Mammary epithelial cell (primary cell): ENCODE measurements at regions of chr10 and their contacts with region 1.

Region 1: GRCh38 chr10:24503461-24504320 is 220.0 kb downstream of the ARHGAP21 start:
- DNase-seq: peak; percentile 54
- H3K4me3 ChIP-seq: no peak overlapping the region
- H3K27ac ChIP-seq: no peak overlapping the region
- H3K4me1 ChIP-seq: peaks cover 2% of the 10 kb centered on the region
- H3K27me3 ChIP-seq: no peaks in the 10 kb centered on the region
- CTCF ChIP-seq: peak; percentile 73

Region 2: DNA sequence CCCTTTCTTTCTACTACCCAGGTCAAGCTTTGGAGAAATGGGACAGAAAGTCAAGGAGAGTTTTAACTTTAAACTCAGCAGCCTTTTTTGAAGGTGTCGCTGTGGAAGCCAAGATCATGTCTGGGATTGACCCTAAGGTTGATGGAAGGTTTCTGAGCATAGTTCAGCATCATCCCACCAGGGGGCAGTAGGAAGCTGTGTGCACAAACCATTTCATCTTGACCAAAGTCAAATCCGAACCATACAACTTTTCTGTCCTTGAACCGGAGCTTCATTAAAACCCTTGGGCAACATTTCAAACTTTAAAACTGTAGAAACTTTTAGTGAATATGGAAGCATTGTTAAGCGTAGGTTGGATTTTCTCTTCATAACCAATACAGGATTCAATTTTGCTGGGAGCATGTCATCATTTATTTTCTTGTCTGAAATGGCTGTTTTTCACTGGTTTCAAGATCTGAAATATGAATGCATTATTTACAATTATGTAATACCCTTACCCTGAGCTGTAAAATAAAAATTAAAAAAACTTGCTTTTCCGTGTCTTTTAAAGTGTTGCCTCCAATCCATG is 509.1 kb before region 1 on chr10:
- CTCF ChIA-PET with region 1: interaction called, 7 read pairs
- dilution Hi-C with region 1: loop called (anchors 5 kb)
- in situ Hi-C with region 1: loop called in 1 of 2 experiments (anchors 25 kb)
- intact Hi-C with region 1: loop called (anchors 1 kb)
- DNase-seq: peak; percentile 25
- H3K4me3 ChIP-seq: no peak overlapping the region
- H3K27ac ChIP-seq: no peak overlapping the region
- H3K4me1 ChIP-seq: no peaks in the 10 kb centered on the region
- H3K27me3 ChIP-seq: peaks cover 3% of the 10 kb centered on the region
- CTCF ChIP-seq: peak; percentile 91 to 93

Region 3: GRCh38 chr10:24238519-24239252 is 265.0 kb before region 1 on chr10:
- CTCF ChIA-PET with region 1: no interaction called
- dilution Hi-C with region 1: no loop called
- in situ Hi-C with region 1: loop called in 1 of 2 experiments (anchors 25 kb)
- intact Hi-C with region 1: no loop called
- DNase-seq: peak; percentile 91
- H3K4me3 ChIP-seq: peak overlapping the region; percentile 53 to 60 (median 58)
- H3K27ac ChIP-seq: peak overlapping the region; percentile 87
- H3K4me1 ChIP-seq: peaks cover 30% of the 10 kb centered on the region
- H3K27me3 ChIP-seq: no peaks in the 10 kb centered on the region
- CTCF ChIP-seq: no peak

Region 4: GRCh38 chr10:24415455-24416125 is 88.1 kb before region 1 on chr10:
- CTCF ChIA-PET with region 1: no interaction called
- dilution Hi-C with region 1: no loop called
- in situ Hi-C with region 1: no loop called
- intact Hi-C with region 1: loop called (anchors 1 kb)
- DNase-seq: peak; percentile 27
- H3K4me3 ChIP-seq: no peak overlapping the region
- H3K27ac ChIP-seq: no peak overlapping the region
- H3K4me1 ChIP-seq: peaks cover 11% of the 10 kb centered on the region
- H3K27me3 ChIP-seq: no peaks in the 10 kb centered on the region
- CTCF ChIP-seq: no peak

Region 5: DNA sequence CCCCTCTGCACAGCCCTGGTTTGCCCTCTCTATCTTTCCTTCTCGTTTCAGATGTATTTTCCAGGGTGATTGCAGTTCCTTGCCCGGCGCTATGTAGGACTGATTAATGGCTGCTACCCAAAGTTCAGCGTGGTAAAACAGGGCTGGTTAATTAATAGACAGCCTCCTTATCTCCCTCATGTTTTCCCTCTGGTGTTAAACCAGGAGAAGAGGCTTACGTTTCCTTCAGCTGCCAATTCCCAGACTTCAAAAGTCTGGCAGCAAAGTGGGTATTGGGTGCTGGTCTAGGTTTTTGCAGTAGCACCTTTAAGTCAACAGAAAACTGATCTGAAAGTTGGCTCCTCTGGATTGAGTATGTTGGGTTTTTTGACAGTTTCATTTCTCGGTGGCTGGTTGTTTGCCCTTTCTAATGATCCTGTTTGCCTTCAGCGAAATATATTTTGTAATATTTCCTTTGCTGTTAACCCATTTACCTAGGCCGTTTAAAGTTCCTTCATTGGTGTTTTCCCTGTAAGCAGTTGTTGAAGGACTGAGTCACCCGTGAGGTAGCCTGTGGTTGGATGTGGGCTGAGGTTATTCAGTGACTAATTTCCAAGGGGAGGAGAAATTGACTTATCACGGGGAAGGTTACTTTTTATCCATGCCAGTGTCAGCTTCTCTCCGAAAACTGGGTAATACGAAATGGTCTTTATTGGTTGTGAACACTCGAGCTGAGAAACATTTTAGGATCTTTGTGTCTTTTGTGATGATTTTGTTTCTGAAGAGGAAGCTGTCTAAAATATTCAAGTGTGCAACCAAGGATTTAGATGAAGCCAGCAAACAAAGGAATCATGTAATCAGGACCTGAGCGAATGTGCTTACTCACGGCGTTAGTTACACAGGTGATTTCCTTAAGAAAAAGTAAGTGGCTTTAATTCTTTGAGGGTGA is 37.5 kb before region 1 on chr10:
- CTCF ChIA-PET with region 1: no interaction called
- dilution Hi-C with region 1: no loop called
- in situ Hi-C with region 1: no loop called
- intact Hi-C with region 1: loop called (anchors 1 kb)
- DNase-seq: peak; percentile 97
- H3K4me3 ChIP-seq: peak overlapping the region; percentile 49 to 82 (median 69)
- H3K27ac ChIP-seq: peak overlapping the region; percentile 99
- H3K4me1 ChIP-seq: peaks cover 48% of the 10 kb centered on the region
- H3K27me3 ChIP-seq: no peaks in the 10 kb centered on the region
- CTCF ChIP-seq: no peak

Region 6: DNA sequence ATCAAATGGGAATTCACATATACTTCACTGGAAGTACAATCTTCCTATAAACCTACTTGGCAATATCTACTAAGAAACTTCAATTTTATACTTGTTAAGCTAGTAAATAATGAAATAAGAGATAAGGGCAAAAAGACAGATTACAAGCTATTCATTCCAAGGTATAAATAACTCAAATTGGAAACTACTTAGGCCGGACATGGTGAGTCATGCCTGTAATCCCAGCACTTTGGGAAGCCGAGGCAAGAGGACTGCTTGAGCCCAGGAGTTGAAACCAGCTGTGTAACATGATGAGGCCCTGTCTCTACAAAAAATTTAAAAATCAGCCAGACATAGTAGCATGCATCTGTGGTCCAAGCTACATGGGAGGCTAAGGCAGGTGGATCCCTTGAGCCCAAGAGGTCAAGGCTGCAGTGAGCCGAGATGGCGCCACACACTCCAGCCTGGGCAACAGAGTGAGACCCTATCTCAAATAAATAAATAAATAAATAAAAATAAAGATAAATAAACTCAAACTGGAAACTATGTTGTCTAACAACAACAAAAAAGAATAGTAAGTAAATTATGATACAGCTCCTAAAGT is 182.4 kb after region 1 on chr10:
- CTCF ChIA-PET with region 1: no interaction called
- dilution Hi-C with region 1: no loop called
- in situ Hi-C with region 1: no loop called
- intact Hi-C with region 1: no loop called
- DNase-seq: no peak
- H3K4me3 ChIP-seq: no peak overlapping the region
- H3K27ac ChIP-seq: no peak overlapping the region
- H3K4me1 ChIP-seq: no peaks in the 10 kb centered on the region
- H3K27me3 ChIP-seq: no peaks in the 10 kb centered on the region
- CTCF ChIP-seq: no peak